ENCODE measurements at regions of chr7 and their contacts with region 1.

Region 1: DNA sequence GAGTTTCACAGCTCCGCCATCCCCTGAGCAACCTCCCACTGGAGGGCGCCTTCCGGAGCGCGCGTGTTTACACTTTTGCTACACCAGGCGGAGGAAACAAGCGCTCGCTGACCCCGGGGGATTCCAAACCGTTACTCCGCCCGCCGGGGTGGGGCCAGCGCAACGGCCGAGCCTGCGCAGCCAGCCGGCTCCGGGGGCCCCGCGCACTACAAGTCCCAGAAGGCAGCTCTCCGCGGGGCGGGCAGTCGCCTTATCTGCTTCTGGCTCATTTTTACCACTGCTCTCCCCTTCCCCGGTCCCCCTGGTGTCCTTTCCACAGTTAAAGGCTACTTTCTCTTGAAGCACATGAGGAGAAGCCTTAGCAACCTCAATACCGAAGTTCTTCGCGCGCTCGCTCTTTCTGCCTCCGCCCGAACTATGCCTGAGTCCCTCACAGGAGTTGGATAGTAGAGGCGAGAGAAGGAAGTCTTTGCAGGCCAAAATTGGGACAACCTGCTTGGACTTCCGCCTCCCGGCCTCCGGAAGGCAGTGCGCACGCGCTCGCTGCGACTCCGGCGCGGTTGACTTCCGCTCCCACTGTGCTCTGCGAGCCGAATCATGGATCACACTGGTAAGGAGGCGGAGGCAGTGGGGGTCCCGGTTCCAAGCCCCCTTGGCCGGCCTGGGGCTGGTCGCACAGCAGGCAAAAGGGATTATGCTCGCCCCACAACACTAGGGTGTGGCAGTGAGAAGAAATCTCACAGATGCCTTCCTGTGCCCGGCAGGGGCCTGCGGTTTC is at the start of gene CBLL1:
- DNase-seq: peak; percentile 94 to 98 (median 97)
- ATAC-seq: peak; percentile 90
- H3K4me3 ChIP-seq: peak within 1 kb of the TSS; percentile 87
- H3K4me3 Mint-ChIP-seq: peak within 1 kb of the TSS; percentile 93
- H3K27ac ChIP-seq: peak within 1 kb of the TSS; percentile 99
- H3K27ac Mint-ChIP-seq: peak within 1 kb of the TSS; percentile 99
- H3K4me1 ChIP-seq: peaks cover 15% of the 10 kb centered on the region
- H3K4me1 Mint-ChIP-seq: peaks cover 55% of the 10 kb centered on the region
- H3K27me3 ChIP-seq: no peaks in the 10 kb centered on the region
- H3K27me3 Mint-ChIP-seq: no peaks in the 10 kb centered on the region
- CTCF ChIP-seq: peak; percentile 68
- total RNA-seq, gene CBLL1: 77.8 to 80.2 TPM

Region 2: DNA sequence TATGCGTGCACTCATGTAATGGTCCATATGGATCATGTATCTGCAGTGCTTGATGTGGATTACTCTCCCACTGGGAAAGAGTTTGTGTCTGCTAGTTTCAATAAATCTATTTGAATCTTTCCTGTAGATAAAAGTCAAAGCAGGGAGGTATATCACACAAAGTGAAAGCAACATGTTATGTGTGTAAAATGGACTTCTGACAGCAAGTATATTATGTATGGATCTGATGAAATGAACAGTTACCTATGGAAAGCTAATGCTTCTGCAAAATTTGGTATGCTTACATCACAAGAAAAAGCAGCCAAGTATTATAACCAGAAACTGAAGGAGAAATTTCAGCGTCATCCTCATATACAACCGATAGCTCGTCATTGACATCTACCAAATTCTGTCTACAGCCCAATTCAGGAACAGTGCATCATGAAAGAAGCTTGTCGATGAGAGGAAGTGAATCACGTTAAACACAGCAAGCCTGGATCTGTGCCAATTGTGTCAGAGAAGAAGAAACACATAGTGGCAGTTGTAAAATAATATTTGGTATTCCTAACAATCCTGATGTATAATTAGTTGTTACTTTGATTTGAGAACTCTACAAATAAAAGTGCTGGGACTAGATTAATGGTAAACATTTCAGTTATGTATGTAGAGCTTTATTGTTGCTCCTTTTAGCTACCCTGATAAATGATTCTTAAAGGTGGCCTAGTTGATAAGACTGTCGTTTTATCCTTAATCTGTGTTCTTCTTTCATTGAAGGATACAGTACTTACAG is 1617.4 kb before region 1 on chr7:
- CTCF ChIA-PET with region 1: no interaction called
- POLR2A ChIA-PET with region 1: no interaction called
- intact Hi-C with region 1: no loop called
- DNase-seq: peak in 12 of 14 experiments; percentile 10 to 78 (median 54)
- ATAC-seq: peak; percentile 97
- H3K4me3 ChIP-seq: no peak overlapping the region
- H3K4me3 Mint-ChIP-seq: peak overlapping the region; percentile 65
- H3K27ac ChIP-seq: no peak overlapping the region
- H3K27ac Mint-ChIP-seq: peak overlapping the region; percentile 61
- H3K4me1 ChIP-seq: no peaks in the 10 kb centered on the region
- H3K4me1 Mint-ChIP-seq: peaks cover 15% of the 10 kb centered on the region
- H3K27me3 ChIP-seq: no peaks in the 10 kb centered on the region
- H3K27me3 Mint-ChIP-seq: no peaks in the 10 kb centered on the region
- CTCF ChIP-seq: no peak

Region 3: GRCh38 chr7:106870983-106871410 is 872.8 kb before region 1 on chr7:
- CTCF ChIA-PET with region 1: no interaction called
- POLR2A ChIA-PET with region 1: no interaction called
- intact Hi-C with region 1: loop called in 1 of 2 experiments (anchors 10 kb)
- DNase-seq: peak in 3 of 14 experiments; percentile 36 to 57 (median 48)
- ATAC-seq: peak; percentile 50
- H3K4me3 ChIP-seq: no peak overlapping the region
- H3K4me3 Mint-ChIP-seq: peak overlapping the region; percentile 28
- H3K27ac ChIP-seq: no peak overlapping the region
- H3K27ac Mint-ChIP-seq: peak overlapping the region; percentile 63
- H3K4me1 ChIP-seq: peaks cover 40% of the 10 kb centered on the region
- H3K4me1 Mint-ChIP-seq: peaks cover 79% of the 10 kb centered on the region
- H3K27me3 ChIP-seq: no peaks in the 10 kb centered on the region
- H3K27me3 Mint-ChIP-seq: no peaks in the 10 kb centered on the region
- CTCF ChIP-seq: no peak

Region 4: DNA sequence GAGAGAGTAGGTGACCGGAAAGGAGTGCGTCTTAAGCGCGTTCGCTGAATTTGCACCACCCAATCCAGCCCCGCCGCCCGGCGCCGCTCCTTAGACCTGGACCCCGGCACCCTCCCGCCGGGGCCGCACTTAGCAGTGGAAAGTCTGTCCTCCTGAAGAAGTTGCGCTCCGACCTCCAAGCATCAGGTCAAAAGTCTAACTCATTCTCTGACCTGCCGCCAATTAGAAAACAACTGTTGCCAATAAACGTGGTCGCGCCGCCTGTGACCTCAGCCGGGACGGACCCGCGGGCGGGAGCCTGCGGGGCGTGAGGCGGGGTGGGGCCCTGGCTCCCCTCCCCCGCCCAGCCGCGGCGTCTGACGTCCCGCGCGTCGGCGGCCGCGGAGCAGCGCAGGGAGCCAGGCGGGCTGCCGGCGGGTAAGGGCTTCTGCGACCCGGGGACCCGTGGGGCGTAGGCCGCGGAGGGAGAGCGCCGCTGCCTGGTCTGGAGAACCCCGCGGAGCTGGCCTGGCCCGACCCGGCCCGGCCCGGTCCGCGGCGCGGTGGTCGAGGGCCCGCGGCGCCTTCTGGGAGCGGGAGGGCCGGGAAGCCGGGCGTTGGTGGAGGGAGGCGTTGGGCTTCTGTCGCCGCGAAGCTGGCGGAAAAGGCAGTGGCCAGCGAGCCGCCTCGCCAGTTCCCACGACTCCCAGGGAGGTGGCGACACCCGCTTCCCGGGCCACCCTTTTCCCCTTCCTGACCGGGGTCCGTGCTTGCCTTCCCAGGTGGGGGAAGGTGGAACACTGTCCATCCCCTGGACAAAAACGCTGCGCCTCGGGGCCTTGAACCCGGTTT is 163.7 kb before region 1 on chr7 and contains the start of gene BCAP29:
- CTCF ChIA-PET with region 1: no interaction called
- POLR2A ChIA-PET with region 1: interaction called, 6 read pairs
- intact Hi-C with region 1: loop called in 1 of 2 experiments (anchors 5 kb)
- DNase-seq: peak; percentile 31 to 87 (median 54)
- ATAC-seq: peak; percentile 95
- H3K4me3 ChIP-seq: peak within 1 kb of the TSS; percentile 87
- H3K4me3 Mint-ChIP-seq: peak within 1 kb of the TSS; percentile 93
- H3K27ac ChIP-seq: peak within 1 kb of the TSS; percentile 26 to 50
- H3K27ac Mint-ChIP-seq: peak within 1 kb of the TSS; percentile 79
- H3K4me1 ChIP-seq: peaks cover 7% of the 10 kb centered on the region
- H3K4me1 Mint-ChIP-seq: peaks cover 26% of the 10 kb centered on the region
- H3K27me3 ChIP-seq: no peaks in the 10 kb centered on the region
- H3K27me3 Mint-ChIP-seq: no peaks in the 10 kb centered on the region
- CTCF ChIP-seq: no peak
- total RNA-seq, gene BCAP29: 11.0 to 11.7 TPM

Region 5: DNA sequence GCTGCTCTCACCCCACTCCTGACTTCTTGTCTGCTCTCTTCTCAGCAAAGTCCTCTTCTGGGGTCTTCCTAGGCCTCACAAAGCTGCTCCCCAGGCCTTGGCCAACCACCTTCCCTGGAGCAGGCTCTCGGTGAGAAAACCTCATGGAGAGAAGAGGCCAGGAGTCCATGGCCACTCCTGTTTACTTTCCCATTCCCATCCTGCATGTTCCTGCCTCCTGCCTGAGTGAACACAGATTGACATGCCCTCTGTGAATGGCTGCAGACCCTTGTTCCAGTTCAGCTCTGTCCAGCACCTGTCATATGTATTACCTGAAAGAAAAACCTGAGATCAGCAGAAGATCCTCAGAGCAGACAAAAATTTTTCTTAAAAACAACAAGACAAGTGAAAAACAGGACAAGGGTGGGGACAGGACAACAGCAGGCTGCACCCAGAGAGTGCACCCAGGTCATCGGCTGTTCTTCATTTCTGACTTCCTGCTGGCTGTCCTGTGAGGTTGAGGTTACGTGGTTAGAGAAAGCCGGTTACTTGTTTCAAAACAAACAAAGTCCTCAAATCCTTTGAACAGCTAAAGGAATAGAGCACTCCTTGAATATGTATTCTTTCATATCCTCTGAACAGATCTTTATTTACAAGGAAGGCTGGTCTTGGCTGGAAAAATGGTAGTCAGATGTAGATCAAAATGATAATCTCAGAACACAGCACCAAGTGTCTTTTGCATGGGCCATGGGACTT is 113.2 kb after region 1 on chr7:
- CTCF ChIA-PET with region 1: no interaction called
- POLR2A ChIA-PET with region 1: interaction called, 32 read pairs
- intact Hi-C with region 1: no loop called
- DNase-seq: peak in 10 of 14 experiments; percentile 13 to 76 (median 30)
- ATAC-seq: peak; percentile 87
- H3K4me3 ChIP-seq: no peak overlapping the region
- H3K4me3 Mint-ChIP-seq: peak overlapping the region; percentile 43
- H3K27ac ChIP-seq: peak overlapping the region; percentile 6 to 76
- H3K27ac Mint-ChIP-seq: peak overlapping the region; percentile 87
- H3K4me1 ChIP-seq: peaks cover 40% of the 10 kb centered on the region
- H3K4me1 Mint-ChIP-seq: peaks cover 79% of the 10 kb centered on the region
- H3K27me3 ChIP-seq: no peaks in the 10 kb centered on the region
- H3K27me3 Mint-ChIP-seq: no peaks in the 10 kb centered on the region
- CTCF ChIP-seq: no peak

Region 6: GRCh38 chr7:108525985-108526767 is 782.4 kb after region 1 on chr7 and contains the start of gene PNPLA8:
- CTCF ChIA-PET with region 1: no interaction called
- POLR2A ChIA-PET with region 1: interaction called, 6 read pairs
- intact Hi-C with region 1: loop called in 1 of 2 experiments (anchors 10 kb)
- DNase-seq: peak; percentile 99 to 100 (median 100)
- ATAC-seq: peak; percentile 88
- H3K4me3 ChIP-seq: peak within 1 kb of the TSS; percentile 88
- H3K4me3 Mint-ChIP-seq: peak within 1 kb of the TSS; percentile 91
- H3K27ac ChIP-seq: peak within 1 kb of the TSS; percentile 92 to 99
- H3K27ac Mint-ChIP-seq: peak within 1 kb of the TSS; percentile 96
- H3K4me1 ChIP-seq: peaks cover 21% of the 10 kb centered on the region
- H3K4me1 Mint-ChIP-seq: peaks cover 49% of the 10 kb centered on the region
- H3K27me3 ChIP-seq: no peaks in the 10 kb centered on the region
- H3K27me3 Mint-ChIP-seq: no peaks in the 10 kb centered on the region
- CTCF ChIP-seq: no peak
- total RNA-seq, gene PNPLA8: 85.9 to 88.6 TPM

Measured in CD4-positive, alpha-beta T cell (primary cell).